ENCODE measurements at regions of chr6 and their contacts with region 1.

Region 1: GRCh38 chr6:70566751-70567382 is at the start of gene SDHAF4:
- DNase-seq: peak; percentile 80
- H3K4me3 ChIP-seq: peak within 1 kb of the TSS; percentile 73 to 100 (median 98)
- H3K27ac ChIP-seq: peak within 1 kb of the TSS; percentile 76
- H3K4me1 ChIP-seq: peaks cover 11% of the 10 kb centered on the region
- H3K27me3 ChIP-seq: no peaks in the 10 kb centered on the region
- CTCF ChIP-seq: no peak
- total RNA-seq, gene SDHAF4: 7.5 to 13.1 TPM

Region 2: GRCh38 chr6:70304616-70305015 is 262.3 kb before region 1 on chr6:
- CTCF ChIA-PET with region 1: no interaction called
- dilution Hi-C with region 1: no loop called
- in situ Hi-C with region 1: no loop called
- intact Hi-C with region 1: loop called (anchors 10 kb)
- DNase-seq: no peak
- H3K4me3 ChIP-seq: no peak overlapping the region
- H3K27ac ChIP-seq: no peak overlapping the region
- H3K4me1 ChIP-seq: no peaks in the 10 kb centered on the region
- H3K27me3 ChIP-seq: peaks cover 51% of the 10 kb centered on the region
- CTCF ChIP-seq: no peak

Region 3: GRCh38 chr6:70667711-70668498 is 101.0 kb after region 1 on chr6 and contains the start of gene SMAP1:
- CTCF ChIA-PET with region 1: no interaction called
- dilution Hi-C with region 1: no loop called
- in situ Hi-C with region 1: no loop called
- intact Hi-C with region 1: loop called (anchors 2 kb)
- DNase-seq: peak; percentile 90
- H3K4me3 ChIP-seq: peak within 1 kb of the TSS; percentile 77 to 97 (median 92)
- H3K27ac ChIP-seq: peak within 1 kb of the TSS; percentile 45
- H3K4me1 ChIP-seq: peaks cover 13% of the 10 kb centered on the region
- H3K27me3 ChIP-seq: no peaks in the 10 kb centered on the region
- CTCF ChIP-seq: no peak
- total RNA-seq, gene SMAP1: 20.2 to 22.1 TPM

Region 4: GRCh38 chr6:70725817-70726415 is 159.0 kb after region 1 on chr6:
- CTCF ChIA-PET with region 1: no interaction called
- dilution Hi-C with region 1: no loop called
- in situ Hi-C with region 1: no loop called
- intact Hi-C with region 1: no loop called
- DNase-seq: no peak
- H3K4me3 ChIP-seq: no peak overlapping the region
- H3K27ac ChIP-seq: no peak overlapping the region
- H3K4me1 ChIP-seq: no peaks in the 10 kb centered on the region
- H3K27me3 ChIP-seq: no peaks in the 10 kb centered on the region
- CTCF ChIP-seq: no peak